Uterus (tissue), 4 donors: ENCODE measurements at regions of chr4 and their contacts with region 1.

Region 1: DNA sequence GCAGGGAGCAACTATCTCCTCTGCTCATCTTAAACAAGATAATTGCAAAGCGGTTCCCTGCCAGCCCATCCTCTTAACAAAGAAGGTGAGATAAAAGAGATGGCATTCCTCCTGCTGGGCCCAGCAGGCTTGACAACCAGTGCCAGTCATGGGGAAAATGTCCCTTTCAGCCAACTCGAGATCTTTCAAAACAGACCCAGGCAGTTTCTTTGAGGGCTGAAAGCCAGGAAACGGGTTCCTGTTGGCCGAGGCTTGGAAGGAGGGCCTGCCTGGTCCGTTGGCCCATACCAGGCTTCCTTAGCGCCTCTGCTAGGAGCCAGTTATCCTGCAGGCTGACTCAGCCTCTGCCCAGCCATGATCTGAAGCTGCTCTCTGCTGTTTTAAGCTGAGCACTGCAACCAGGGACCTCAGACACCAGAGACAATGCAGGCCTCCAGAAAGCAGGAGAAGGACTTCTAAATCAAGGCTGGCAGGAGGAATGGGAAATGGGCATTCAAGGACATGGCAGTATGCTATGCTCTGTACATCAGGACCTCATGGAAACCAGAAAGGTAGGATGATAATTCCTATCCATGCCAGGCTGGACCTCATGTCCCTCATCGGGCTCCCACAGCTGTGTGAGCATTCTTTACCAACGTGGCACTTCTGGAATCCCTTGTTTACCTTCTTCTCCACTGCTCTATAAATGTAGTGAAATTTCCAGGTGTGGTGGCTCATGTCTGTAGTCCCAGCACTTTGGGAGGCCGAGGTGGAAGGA is 42.4 kb upstream of the SLC2A9 start:
- DNase-seq: peak; percentile 50 to 54
- H3K4me3 ChIP-seq: no peak overlapping the region
- H3K27ac ChIP-seq: peak overlapping the region; percentile 20 to 29
- H3K4me1 ChIP-seq: no peaks in the 10 kb centered on the region
- H3K27me3 ChIP-seq: no peaks in the 10 kb centered on the region
- CTCF ChIP-seq: peak; percentile 41 to 67 (median 60)
- POLR2A ChIP-seq: no peak

Region 2: DNA sequence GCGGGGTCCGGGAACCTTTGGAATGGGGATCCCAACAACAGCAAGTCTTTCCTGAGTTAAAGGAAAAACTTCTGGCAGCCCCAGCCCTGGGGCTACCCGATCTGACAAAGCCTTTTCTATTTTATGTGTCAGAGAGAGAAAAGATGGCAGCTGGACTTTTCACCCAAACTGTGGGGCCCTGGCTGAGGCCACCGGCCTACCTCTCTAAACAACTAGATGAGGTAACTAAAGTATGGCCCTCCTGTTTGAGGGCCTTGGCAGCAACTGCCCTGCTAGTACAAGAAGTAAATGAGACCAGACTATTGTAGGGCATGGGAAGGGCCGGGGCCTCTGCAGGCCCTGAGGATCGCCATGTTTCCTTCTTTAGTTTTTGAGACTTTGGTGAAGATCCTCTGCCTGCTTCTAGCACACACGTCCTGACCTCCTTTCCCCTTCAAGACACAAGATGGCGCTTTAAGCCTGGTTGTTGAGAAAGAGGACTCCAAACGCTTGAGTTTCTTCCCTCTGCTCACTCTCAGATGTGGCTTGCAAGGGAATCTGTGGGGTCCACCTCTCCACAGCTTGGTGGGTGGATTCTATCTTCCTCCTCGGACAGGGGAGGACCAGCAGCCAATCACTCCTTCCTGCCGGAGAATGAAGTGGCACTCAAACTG is 300.8 kb before region 1 on chr4:
- intact Hi-C with region 1: loop called (anchors 2 kb)
- DNase-seq: peak; percentile 35 to 49
- H3K4me3 ChIP-seq: no peak overlapping the region
- H3K27ac ChIP-seq: no peak overlapping the region
- H3K4me1 ChIP-seq: no peaks in the 10 kb centered on the region
- H3K27me3 ChIP-seq: no peaks in the 10 kb centered on the region
- CTCF ChIP-seq: peak; percentile 41 to 68 (median 64)
- POLR2A ChIP-seq: no peak